Left colon (tissue), 2 donors: ENCODE measurements at regions of chr10 and their contacts with region 1.

Region 1: DNA sequence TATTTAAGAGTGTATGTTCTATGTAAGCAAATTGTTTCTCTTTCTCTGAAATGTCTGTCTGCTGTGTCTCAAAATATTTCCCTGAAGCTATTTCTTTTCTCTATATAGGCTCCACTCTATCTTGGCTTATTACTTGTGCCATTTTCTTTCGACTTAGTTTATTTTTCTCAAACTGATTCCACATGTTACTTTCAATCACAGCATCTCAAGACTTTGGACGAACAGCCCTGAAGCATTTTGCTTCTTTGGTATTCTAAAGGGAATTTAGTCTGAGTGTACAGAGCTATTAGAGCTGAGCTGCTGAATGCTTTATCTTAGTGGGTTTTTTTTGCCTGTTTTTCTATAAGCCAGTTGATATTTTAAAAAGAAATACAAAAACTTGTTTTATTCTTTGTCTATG is 95.7 kb downstream of the PLXDC2 start:
- DNase-seq: no peak
- ATAC-seq: no peak

Region 2: GRCh38 chr10:19892295-19893076 is 19.4 kb before region 1 on chr10:
- intact Hi-C with region 1: loop called in 1 of 2 experiments (anchors 2 kb)
- DNase-seq: no peak
- ATAC-seq: peak; percentile 51